Motor neuron (in vitro differentiated cells): ENCODE measurements at regions of chr11 and their contacts with region 1.

Region 1: GRCh38 chr11:62427630-62428233 is 8.9 kb downstream of the SCGB1A1 start:
- ATAC-seq: peak in 6 of 8 experiments; percentile 21 to 76 (median 40)
- H3K4me3 ChIP-seq: no peak overlapping the region
- H3K27ac ChIP-seq: no peak overlapping the region
- H3K4me1 ChIP-seq: peaks cover under 1% of the 10 kb centered on the region in 2 donors

Region 2: GRCh38 chr11:61860054-61860903 is 567.5 kb before region 1 on chr11:
- in situ Hi-C with region 1: no loop called
- ATAC-seq: no peak
- H3K4me3 ChIP-seq: no peak overlapping the region
- H3K27ac ChIP-seq: no peak overlapping the region
- H3K4me1 ChIP-seq: no peaks in the 10 kb centered on the region

Region 3: DNA sequence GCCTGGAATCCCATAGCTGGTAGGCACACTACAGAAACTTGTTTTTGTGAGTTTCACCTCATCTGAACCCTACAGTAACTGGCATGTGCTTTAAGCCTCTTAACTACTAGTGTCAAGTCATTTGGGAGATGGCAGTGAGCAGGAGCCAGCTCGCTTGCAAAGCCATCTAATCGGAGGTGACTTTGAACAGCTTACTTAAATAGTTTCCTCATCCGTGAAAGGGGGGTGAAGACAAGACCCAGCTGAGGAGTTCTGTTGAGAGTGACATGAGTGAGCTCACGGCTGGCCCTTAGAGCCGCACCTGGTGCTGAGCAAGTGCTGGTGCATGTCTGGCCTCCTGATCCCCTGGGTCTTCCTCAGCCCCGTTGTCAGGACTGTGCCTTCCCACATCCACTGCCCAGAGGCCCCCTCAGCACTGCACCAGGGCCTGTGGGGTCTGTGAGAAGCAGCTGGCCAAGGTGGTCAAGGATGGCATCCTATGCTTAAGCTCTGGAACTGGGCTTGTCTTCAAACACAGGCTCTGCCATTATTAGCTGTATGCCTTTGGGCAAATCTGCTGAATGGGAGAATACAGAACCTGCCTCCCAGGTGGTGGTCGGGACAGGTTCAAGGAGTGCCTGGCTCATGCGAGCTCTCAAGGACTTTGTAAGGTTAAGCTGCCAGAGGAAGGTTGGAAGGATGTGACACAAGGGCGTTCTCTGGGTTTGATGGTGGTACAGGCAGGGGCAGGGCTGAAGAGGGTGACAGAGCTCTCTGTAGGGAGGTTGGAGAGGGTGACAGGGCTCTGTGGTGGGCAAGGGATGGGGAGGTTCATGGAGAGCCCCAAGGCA is 276.6 kb before region 1 on chr11:
- in situ Hi-C with region 1: no loop called
- ATAC-seq: no peak
- H3K4me3 ChIP-seq: no peak overlapping the region
- H3K27ac ChIP-seq: no peak overlapping the region
- H3K4me1 ChIP-seq: no peaks in the 10 kb centered on the region

Region 4: GRCh38 chr11:62169091-62169847 is 258.5 kb before region 1 on chr11:
- in situ Hi-C with region 1: no loop called
- ATAC-seq: no peak
- H3K4me3 ChIP-seq: no peak overlapping the region
- H3K27ac ChIP-seq: no peak overlapping the region
- H3K4me1 ChIP-seq: peaks cover 4 to 15% of the 10 kb centered on the region in 2 donors

Region 5: DNA sequence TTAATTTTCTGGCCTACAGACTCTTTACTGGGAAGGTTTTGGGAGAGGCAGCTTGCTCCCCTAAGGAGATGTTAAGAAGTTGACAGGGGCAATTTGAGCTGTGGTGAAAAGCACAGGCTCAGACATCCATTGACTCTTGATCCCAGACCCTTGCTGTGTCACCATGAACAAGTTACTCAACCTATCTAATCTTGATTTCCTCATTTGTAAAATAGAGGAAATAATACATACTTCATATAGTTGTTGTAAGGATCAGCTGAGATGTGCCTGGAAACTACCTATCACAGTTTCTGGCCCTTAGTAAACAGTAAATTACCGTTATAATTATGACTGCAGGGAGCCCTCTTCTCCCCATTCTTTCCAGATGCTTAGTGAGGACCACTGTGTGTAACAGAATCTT is 112.3 kb before region 1 on chr11:
- in situ Hi-C with region 1: no loop called
- ATAC-seq: no peak
- H3K4me3 ChIP-seq: no peak overlapping the region
- H3K27ac ChIP-seq: no peak overlapping the region
- H3K4me1 ChIP-seq: no peaks in the 10 kb centered on the region

Region 6: DNA sequence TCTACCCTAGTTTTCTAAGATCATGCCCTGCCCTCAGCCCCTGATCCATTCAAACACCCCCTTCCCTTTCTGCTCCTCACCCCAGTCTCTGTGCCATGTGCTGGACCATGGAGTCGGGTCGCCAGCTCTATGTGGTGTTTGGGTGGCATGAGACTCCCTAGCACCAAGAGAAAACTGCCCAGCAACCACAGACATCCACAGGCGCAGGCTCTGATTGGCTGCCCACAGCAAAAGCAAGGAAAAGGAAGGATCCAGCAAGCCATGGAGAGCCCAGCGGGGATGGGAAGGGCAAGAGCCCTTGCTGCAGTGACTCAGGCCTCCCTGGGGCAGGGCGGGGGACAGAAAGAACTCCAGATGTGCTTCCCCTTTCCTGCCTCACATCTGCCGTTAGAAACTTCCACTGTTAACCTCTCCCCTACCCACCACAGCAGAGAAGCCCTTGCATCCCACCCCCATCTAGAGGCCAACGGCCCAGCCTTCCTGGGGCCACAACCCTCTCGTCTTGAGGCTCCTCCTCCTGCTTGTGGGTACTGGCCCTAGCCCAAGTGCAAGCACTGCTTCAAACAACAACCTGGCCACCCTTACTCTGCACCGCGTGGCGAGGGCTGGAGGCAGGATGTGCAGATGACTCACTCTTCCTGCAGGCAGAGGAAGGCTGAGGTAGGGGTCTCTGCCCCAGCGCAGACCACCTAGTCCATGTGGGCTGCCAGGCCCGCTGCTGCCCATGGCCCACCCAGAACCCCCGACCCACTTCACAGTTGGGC is 128.6 kb after region 1 on chr11:
- in situ Hi-C with region 1: loop called in 2 of 9 experiments (anchors 10 to 25 kb)
- ATAC-seq: peak; percentile 43 to 76 (median 56)
- H3K4me3 ChIP-seq: no peak overlapping the region
- H3K27ac ChIP-seq: peak overlapping the region in 1 of 2 donors; percentile 47
- H3K4me1 ChIP-seq: peaks cover 4 to 42% of the 10 kb centered on the region in 2 donors